Panc1 (cell line): ENCODE measurements at regions of chr11 and their contacts with region 1.

Region 1: GRCh38 chr11:33716236-33716635 is 15.6 kb upstream of the C11orf91 start:
- DNase-seq: no peak
- ATAC-seq: peak; percentile 69
- H3K4me3 ChIP-seq: no peak overlapping the region
- H3K27ac ChIP-seq: peak overlapping the region; percentile 60; the same call in 1 of the 2 replicates
- H3K4me1 ChIP-seq: peaks cover 27% of the 10 kb centered on the region
- H3K27me3 ChIP-seq: no peaks in the 10 kb centered on the region
- CTCF ChIP-seq: peak; percentile 59; the same call in 1 of the 2 replicates

Region 2: DNA sequence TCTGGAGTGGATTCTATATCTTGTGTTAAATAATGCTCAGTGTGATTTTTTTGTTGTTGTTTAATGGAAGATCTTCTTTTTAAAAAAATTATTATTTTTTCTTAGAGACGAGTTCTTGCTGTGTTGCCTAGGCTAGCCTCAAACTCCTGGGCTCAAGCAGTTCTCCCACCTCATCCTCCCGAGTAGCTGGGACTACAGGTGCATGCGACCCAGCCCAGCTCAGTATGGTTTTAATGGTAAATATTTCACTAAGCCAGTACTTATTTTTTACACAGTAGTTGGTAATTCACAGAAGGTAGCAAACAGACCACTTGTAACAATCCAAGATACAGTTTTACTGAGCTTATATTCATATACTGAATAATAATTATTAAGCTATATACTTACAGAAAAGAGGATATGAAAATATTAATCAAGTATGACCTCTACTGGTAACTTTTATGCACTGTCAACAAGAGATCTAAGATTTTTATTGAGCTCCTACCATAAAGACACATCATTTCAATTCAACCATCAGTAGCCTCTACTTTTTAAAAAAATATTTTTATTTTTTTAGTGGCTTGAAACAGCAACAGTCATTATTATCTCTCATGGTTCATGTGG is 26.1 kb after region 1 on chr11:
- CTCF ChIA-PET with region 1: interaction called, 18 read pairs
- POLR2A ChIA-PET with region 1: no interaction called
- in situ Hi-C with region 1: no loop called
- intact Hi-C with region 1: no loop called
- DNase-seq: no peak
- ATAC-seq: peak; percentile 82
- H3K4me3 ChIP-seq: no peak overlapping the region
- H3K27ac ChIP-seq: peak overlapping the region; percentile 32; the same call in 1 of the 2 replicates
- H3K4me1 ChIP-seq: peaks cover 15% of the 10 kb centered on the region
- H3K27me3 ChIP-seq: no peaks in the 10 kb centered on the region
- CTCF ChIP-seq: peak; percentile 65

Region 3: GRCh38 chr11:33790040-33790439 is 73.8 kb after region 1 on chr11:
- CTCF ChIA-PET with region 1: no interaction called
- POLR2A ChIA-PET with region 1: no interaction called
- in situ Hi-C with region 1: no loop called
- intact Hi-C with region 1: no loop called
- DNase-seq: no peak
- ATAC-seq: no peak
- H3K4me3 ChIP-seq: no peak overlapping the region
- H3K27ac ChIP-seq: no peak overlapping the region
- H3K4me1 ChIP-seq: no peaks in the 10 kb centered on the region
- H3K27me3 ChIP-seq: peaks cover 3% of the 10 kb centered on the region; the same call in 1 of the 2 replicates
- CTCF ChIP-seq: no peak